GM13977 (cell line): ENCODE measurements at regions of chr20 and their contacts with region 1.

Region 1: DNA sequence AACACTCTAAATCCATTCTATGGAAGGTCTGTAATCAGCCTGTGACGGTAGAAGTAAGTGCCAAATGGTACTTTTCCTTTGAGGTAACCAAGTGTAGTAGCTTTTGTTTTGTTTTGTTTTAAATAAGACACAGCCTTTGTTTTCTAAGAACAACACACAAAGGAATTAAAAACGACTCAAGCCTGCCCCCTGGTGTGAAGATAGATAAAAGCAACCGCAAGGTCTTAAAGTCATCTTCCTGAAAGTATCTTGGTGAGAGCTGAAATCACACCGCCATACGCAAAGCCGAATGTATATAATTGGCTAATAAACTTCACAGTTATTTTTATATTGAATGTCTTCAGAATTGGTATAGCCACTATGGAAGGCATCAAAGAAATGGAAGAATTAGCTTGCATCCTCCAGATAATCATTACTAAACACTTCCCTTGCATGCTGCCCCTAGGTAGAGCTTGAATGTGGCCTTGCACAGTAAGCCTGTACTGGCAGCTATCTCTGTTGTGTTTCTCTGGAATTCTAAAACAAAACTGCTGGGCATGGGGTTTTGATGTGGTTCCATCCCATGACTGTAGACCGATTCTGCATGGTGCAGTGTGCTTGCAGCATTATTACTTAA is 95.6 kb downstream of the LAMP5 start:
- DNase-seq: peak; percentile 32
- CTCF ChIP-seq: peak; percentile 56

Region 2: DNA sequence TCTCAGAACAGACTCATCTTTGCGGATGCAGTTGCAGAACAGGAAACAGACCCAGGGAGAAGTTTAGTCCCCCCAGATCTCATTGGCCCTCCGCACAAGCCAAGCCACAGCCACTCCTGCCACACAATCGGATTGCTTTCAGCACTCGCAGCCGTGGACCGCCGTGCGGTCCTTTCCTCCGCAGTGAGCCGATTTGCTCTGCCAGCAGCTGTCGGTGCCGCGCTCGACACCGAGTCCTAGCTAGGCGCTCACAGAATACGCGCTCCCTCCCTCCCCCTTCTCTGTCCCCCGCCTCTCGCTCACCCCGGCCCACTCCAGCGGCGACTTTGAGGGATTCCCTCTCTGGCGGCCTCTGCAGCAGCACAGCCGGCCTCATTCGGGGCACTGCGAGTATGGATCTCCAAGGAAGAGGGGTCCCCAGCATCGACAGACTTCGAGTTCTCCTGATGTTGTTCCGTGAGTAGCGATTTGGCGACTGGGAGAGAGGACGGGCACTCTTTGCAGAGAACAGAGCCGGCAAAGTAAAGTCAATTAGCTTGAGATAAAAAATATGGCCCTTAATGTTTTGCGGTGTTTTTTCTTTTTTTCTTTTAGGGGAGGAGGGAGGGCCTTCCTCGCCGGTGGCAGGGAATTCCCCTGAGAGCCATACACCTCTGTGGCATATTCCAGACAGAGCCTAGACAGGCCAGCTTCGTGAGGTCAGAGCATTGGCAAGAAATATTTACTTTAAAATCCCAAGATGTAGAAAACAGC is 95.4 kb before region 1 on chr20 and contains the start of gene LAMP5:
- in situ Hi-C with region 1: loop called (anchors 10 kb)
- DNase-seq: no peak
- CTCF ChIP-seq: no peak